ENCODE measurements at regions of chr11 and their contacts with region 1.

Region 1: GRCh38 chr11:8688414-8689362 is 6.1 kb downstream of the RPL27A start:
- DNase-seq: peak; percentile 82
- H3K4me3 Mint-ChIP-seq: peak overlapping the region; percentile 94
- H3K27ac Mint-ChIP-seq: peak overlapping the region; percentile 91
- H3K4me1 Mint-ChIP-seq: peaks cover 60% of the 10 kb centered on the region
- H3K27me3 Mint-ChIP-seq: no peaks in the 10 kb centered on the region

Region 2: GRCh38 chr11:7986768-7987559 is 701.7 kb before region 1 on chr11 and contains the start of gene EIF3F:
- intact Hi-C with region 1: loop called (anchors 1 kb)
- DNase-seq: peak; percentile 91
- H3K4me3 Mint-ChIP-seq: peak within 1 kb of the TSS; percentile 99
- H3K27ac Mint-ChIP-seq: peak within 1 kb of the TSS; percentile 93
- H3K4me1 Mint-ChIP-seq: peaks cover 39% of the 10 kb centered on the region
- H3K27me3 Mint-ChIP-seq: peaks cover 2% of the 10 kb centered on the region
- total RNA-seq, gene EIF3F: 210 and 214 TPM in 2 replicates

Region 3: GRCh38 chr11:8527939-8528338 is 160.7 kb before region 1 on chr11:
- intact Hi-C with region 1: no loop called
- DNase-seq: no peak
- H3K4me3 Mint-ChIP-seq: no peak overlapping the region
- H3K27ac Mint-ChIP-seq: no peak overlapping the region
- H3K4me1 Mint-ChIP-seq: no peaks in the 10 kb centered on the region
- H3K27me3 Mint-ChIP-seq: no peaks in the 10 kb centered on the region

Region 4: GRCh38 chr11:8839957-8840945 is 151.6 kb after region 1 on chr11:
- intact Hi-C with region 1: loop called (anchors 2 kb)
- DNase-seq: no peak
- H3K4me3 Mint-ChIP-seq: peak overlapping the region; percentile 2
- H3K27ac Mint-ChIP-seq: peak overlapping the region; percentile 36
- H3K4me1 Mint-ChIP-seq: peaks cover 36% of the 10 kb centered on the region
- H3K27me3 Mint-ChIP-seq: no peaks in the 10 kb centered on the region

Region 5: GRCh38 chr11:8911029-8911826 is 222.5 kb after region 1 on chr11 and contains the start of gene AKIP1:
- intact Hi-C with region 1: loop called (anchors 1 kb)
- DNase-seq: peak; percentile 77
- H3K4me3 Mint-ChIP-seq: peak within 1 kb of the TSS; percentile 97
- H3K27ac Mint-ChIP-seq: peak within 1 kb of the TSS; percentile 87
- H3K4me1 Mint-ChIP-seq: peaks cover 45% of the 10 kb centered on the region
- H3K27me3 Mint-ChIP-seq: peaks cover 12% of the 10 kb centered on the region
- total RNA-seq, gene AKIP1: 33.4 and 36.9 TPM in 2 replicates

Measured in activated T-helper 1 cell treated with anti-CD3 and anti-CD28 coated beads, Interleukin-12 subunit alpha, Interleukin-12 subunit beta, Interleukin-2, Interleukin-4 antibody, amounts not matched to agents 30 ng/mL and 10 ng/mL and 1 ng/mL, durations not matched to agents 14 hours and 24 hours and 36 hours (primary cell).